CD14-positive monocyte (primary cell): ENCODE measurements at regions of chr5 and their contacts with region 1.

Region 1: GRCh38 chr5:28430565-28431178 is 1392.3 kb upstream of the CDH9 start:
- DNase-seq: no peak
- H3K4me3 ChIP-seq: no peak overlapping the region
- H3K4me3 Mint-ChIP-seq: no peak overlapping the region
- H3K27ac ChIP-seq: no peak overlapping the region
- H3K27ac Mint-ChIP-seq: no peak overlapping the region
- H3K4me1 ChIP-seq: no peaks in the 10 kb centered on the region
- H3K4me1 Mint-ChIP-seq: no peaks in the 10 kb centered on the region
- H3K27me3 ChIP-seq: no peaks in the 10 kb centered on the region
- H3K27me3 Mint-ChIP-seq: no peaks in the 10 kb centered on the region
- CTCF ChIP-seq: no peak

Region 2: DNA sequence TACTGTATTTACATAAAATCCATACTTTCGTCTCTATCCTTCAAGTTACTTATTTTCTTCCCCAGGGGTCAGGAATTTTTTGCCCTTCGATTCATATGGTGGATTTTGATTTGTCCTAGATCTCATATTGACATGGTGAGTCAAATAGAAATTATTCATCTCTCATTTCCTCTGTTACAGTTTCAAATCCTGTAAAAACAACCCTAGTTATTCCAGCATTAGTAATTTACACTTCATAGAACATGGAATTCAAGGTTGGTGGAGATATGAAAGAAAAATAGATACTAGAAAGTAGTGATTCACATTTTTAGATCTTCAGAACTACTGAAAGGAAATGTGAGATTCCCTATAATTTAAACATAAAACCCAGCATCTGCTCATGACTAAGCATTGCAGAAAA is 61.3 kb before region 1 on chr5:
- intact Hi-C with region 1: loop called in 1 of 2 experiments (anchors 10 kb)
- DNase-seq: no peak
- H3K4me3 ChIP-seq: no peak overlapping the region
- H3K4me3 Mint-ChIP-seq: no peak overlapping the region
- H3K27ac ChIP-seq: no peak overlapping the region
- H3K27ac Mint-ChIP-seq: no peak overlapping the region
- H3K4me1 ChIP-seq: no peaks in the 10 kb centered on the region
- H3K4me1 Mint-ChIP-seq: no peaks in the 10 kb centered on the region
- H3K27me3 ChIP-seq: no peaks in the 10 kb centered on the region
- H3K27me3 Mint-ChIP-seq: no peaks in the 10 kb centered on the region
- CTCF ChIP-seq: no peak